ENCODE measurements at regions of chr16 and their contacts with region 1.

Region 1: GRCh38 chr16:28863929-28864793 is 518 bp downstream of the SH2B1 start:
- DNase-seq: peak; percentile 41
- ATAC-seq: no peak
- H3K4me3 ChIP-seq: peak overlapping the region; percentile 9 to 98 (median 77)
- H3K4me3 Mint-ChIP-seq: peak overlapping the region; percentile 100
- H3K27ac ChIP-seq: peak overlapping the region; percentile 79 to 82
- H3K27ac Mint-ChIP-seq: peak overlapping the region; percentile 99
- H3K4me1 ChIP-seq: peaks cover 5 to 25% of the 10 kb centered on the region in 2 donors
- H3K4me1 Mint-ChIP-seq: peaks cover 28% of the 10 kb centered on the region
- H3K27me3 ChIP-seq: no peaks in the 10 kb centered on the region
- H3K27me3 Mint-ChIP-seq: no peaks in the 10 kb centered on the region
- CTCF ChIP-seq: no peak

Region 2: GRCh38 chr16:28823872-28824716 is 40.1 kb before region 1 on chr16:
- CTCF ChIA-PET with region 1: no interaction called
- POLR2A ChIA-PET with region 1: interaction called, 23 read pairs
- intact Hi-C with region 1: loop called (anchors 1 kb)
- DNase-seq: peak; percentile 97
- ATAC-seq: peak; percentile 76
- H3K4me3 ChIP-seq: peak overlapping the region; percentile 76 to 95 (median 87)
- H3K4me3 Mint-ChIP-seq: peak overlapping the region; percentile 98
- H3K27ac ChIP-seq: peak overlapping the region; percentile 98 to 99
- H3K27ac Mint-ChIP-seq: peak overlapping the region; percentile 97
- H3K4me1 ChIP-seq: peaks cover 19 to 23% of the 10 kb centered on the region in 2 donors
- H3K4me1 Mint-ChIP-seq: peaks cover 28% of the 10 kb centered on the region
- H3K27me3 ChIP-seq: no peaks in the 10 kb centered on the region
- H3K27me3 Mint-ChIP-seq: no peaks in the 10 kb centered on the region
- CTCF ChIP-seq: no peak

Region 3: GRCh38 chr16:28846080-28846932 is 17.9 kb before region 1 on chr16 and contains the start of gene TUFM:
- CTCF ChIA-PET with region 1: interaction called, 41 read pairs
- POLR2A ChIA-PET with region 1: interaction called, 56 read pairs
- intact Hi-C with region 1: no loop called
- DNase-seq: peak; percentile 99
- ATAC-seq: peak; percentile 98
- H3K4me3 ChIP-seq: peak within 1 kb of the TSS; percentile 73 to 98 (median 89)
- H3K4me3 Mint-ChIP-seq: peak within 1 kb of the TSS; percentile 91
- H3K27ac ChIP-seq: peak within 1 kb of the TSS; percentile 80 to 87
- H3K27ac Mint-ChIP-seq: peak within 1 kb of the TSS; percentile 91
- H3K4me1 ChIP-seq: peaks cover 18 to 26% of the 10 kb centered on the region in 2 donors
- H3K4me1 Mint-ChIP-seq: peaks cover 30% of the 10 kb centered on the region
- H3K27me3 ChIP-seq: no peaks in the 10 kb centered on the region
- H3K27me3 Mint-ChIP-seq: no peaks in the 10 kb centered on the region
- CTCF ChIP-seq: peak; percentile 75
- total RNA-seq, gene TUFM: 129 and 143 TPM in 2 replicates

Region 4: GRCh38 chr16:28879841-28880588 is 15.9 kb after region 1 on chr16:
- CTCF ChIA-PET with region 1: interaction called, 6 read pairs
- POLR2A ChIA-PET with region 1: interaction called, 7 read pairs
- intact Hi-C with region 1: loop called (anchors 1 kb)
- DNase-seq: peak; percentile 89
- ATAC-seq: peak; percentile 99
- H3K4me3 ChIP-seq: peak overlapping the region; percentile 53 to 94 (median 87)
- H3K4me3 Mint-ChIP-seq: peak overlapping the region; percentile 92
- H3K27ac ChIP-seq: peak overlapping the region in 1 of 2 donors; percentile 43
- H3K27ac Mint-ChIP-seq: no peak overlapping the region
- H3K4me1 ChIP-seq: peaks cover 13 to 17% of the 10 kb centered on the region in 2 donors
- H3K4me1 Mint-ChIP-seq: peaks cover 15% of the 10 kb centered on the region
- H3K27me3 ChIP-seq: peaks cover 0 to 8% (median 1%) of the 10 kb centered on the region in 4 experiments
- H3K27me3 Mint-ChIP-seq: peaks cover 6% of the 10 kb centered on the region
- CTCF ChIP-seq: no peak

Region 5: GRCh38 chr16:28902909-28903308 is 38.7 kb after region 1 on chr16:
- CTCF ChIA-PET with region 1: no interaction called
- POLR2A ChIA-PET with region 1: no interaction called
- intact Hi-C with region 1: no loop called
- DNase-seq: no peak
- ATAC-seq: peak; percentile 56
- H3K4me3 ChIP-seq: no peak overlapping the region
- H3K4me3 Mint-ChIP-seq: peak overlapping the region; percentile 32
- H3K27ac ChIP-seq: peak overlapping the region in 1 of 2 donors; percentile 55
- H3K27ac Mint-ChIP-seq: peak overlapping the region; percentile 83
- H3K4me1 ChIP-seq: peaks cover 12 to 16% of the 10 kb centered on the region in 2 donors
- H3K4me1 Mint-ChIP-seq: peaks cover 16% of the 10 kb centered on the region
- H3K27me3 ChIP-seq: no peaks in the 10 kb centered on the region
- H3K27me3 Mint-ChIP-seq: no peaks in the 10 kb centered on the region
- CTCF ChIP-seq: no peak

Region 6: GRCh38 chr16:28935924-28936783 is 72.0 kb after region 1 on chr16:
- CTCF ChIA-PET with region 1: interaction called, 4 read pairs
- POLR2A ChIA-PET with region 1: interaction called, 13 read pairs
- intact Hi-C with region 1: no loop called
- DNase-seq: peak; percentile 90
- ATAC-seq: peak; percentile 89
- H3K4me3 ChIP-seq: peak overlapping the region in 3 of 5 experiments; percentile 12 to 23 (median 12)
- H3K4me3 Mint-ChIP-seq: peak overlapping the region; percentile 74
- H3K27ac ChIP-seq: peak overlapping the region; percentile 68 to 75
- H3K27ac Mint-ChIP-seq: peak overlapping the region; percentile 82
- H3K4me1 ChIP-seq: peaks cover 48 to 60% of the 10 kb centered on the region in 2 donors
- H3K4me1 Mint-ChIP-seq: peaks cover 60% of the 10 kb centered on the region
- H3K27me3 ChIP-seq: no peaks in the 10 kb centered on the region
- H3K27me3 Mint-ChIP-seq: no peaks in the 10 kb centered on the region
- CTCF ChIP-seq: no peak

Region 7: GRCh38 chr16:28964072-28964471 is 99.9 kb after region 1 on chr16:
- CTCF ChIA-PET with region 1: no interaction called
- POLR2A ChIA-PET with region 1: no interaction called
- intact Hi-C with region 1: no loop called
- DNase-seq: no peak
- ATAC-seq: no peak
- H3K4me3 ChIP-seq: no peak overlapping the region
- H3K4me3 Mint-ChIP-seq: no peak overlapping the region
- H3K27ac ChIP-seq: no peak overlapping the region
- H3K27ac Mint-ChIP-seq: no peak overlapping the region
- H3K4me1 ChIP-seq: no peaks in the 10 kb centered on the region
- H3K4me1 Mint-ChIP-seq: no peaks in the 10 kb centered on the region
- H3K27me3 ChIP-seq: no peaks in the 10 kb centered on the region
- H3K27me3 Mint-ChIP-seq: no peaks in the 10 kb centered on the region
- CTCF ChIP-seq: no peak